GM23248 (cell line): ENCODE measurements at regions of chr21 and their contacts with region 1.

Region 1: DNA sequence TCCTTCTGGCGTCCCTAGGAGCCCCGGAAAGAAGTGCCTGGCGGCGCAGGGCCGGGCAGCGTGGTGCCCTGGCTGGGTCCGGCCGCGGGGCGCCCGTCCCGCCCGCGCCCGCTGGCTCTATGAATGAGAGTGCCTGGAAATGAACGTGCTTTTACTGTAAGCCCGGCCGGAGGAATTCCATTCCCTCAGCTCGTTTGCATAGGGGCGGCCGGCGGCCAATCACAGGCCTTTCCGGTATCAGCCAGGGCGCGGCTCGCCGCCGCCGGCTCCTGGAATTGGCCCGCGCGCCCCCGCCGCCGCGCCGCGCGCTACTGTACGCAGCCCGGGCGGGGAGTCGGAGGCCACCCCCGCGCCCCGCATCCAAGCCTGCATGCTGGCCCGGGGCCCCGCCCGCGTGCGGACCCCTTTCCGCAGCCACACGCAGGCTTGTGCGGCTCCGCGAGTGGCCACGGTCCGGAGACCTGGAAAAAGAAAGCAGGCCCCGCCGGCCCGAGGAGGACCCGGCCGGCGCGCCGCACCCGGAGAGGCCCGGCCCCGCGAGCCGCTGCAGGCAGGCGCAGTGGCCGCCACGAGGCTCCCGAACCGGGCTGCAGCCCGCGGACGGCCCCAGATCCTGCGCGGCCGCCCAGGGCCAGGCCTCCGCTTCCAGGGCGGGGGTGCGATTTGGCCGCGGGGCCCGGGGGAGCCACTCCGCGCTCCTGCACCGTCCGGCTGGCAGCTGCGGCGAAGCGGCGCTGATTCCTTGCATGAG is 160.4 kb downstream of the RUNX1 start:
- DNase-seq: peak; percentile 98
- H3K4me3 ChIP-seq: peak overlapping the region; percentile 97
- H3K27ac ChIP-seq: peak overlapping the region; percentile 99
- H3K4me1 ChIP-seq: peaks cover 19% of the 10 kb centered on the region
- H3K27me3 ChIP-seq: no peaks in the 10 kb centered on the region

Region 2: DNA sequence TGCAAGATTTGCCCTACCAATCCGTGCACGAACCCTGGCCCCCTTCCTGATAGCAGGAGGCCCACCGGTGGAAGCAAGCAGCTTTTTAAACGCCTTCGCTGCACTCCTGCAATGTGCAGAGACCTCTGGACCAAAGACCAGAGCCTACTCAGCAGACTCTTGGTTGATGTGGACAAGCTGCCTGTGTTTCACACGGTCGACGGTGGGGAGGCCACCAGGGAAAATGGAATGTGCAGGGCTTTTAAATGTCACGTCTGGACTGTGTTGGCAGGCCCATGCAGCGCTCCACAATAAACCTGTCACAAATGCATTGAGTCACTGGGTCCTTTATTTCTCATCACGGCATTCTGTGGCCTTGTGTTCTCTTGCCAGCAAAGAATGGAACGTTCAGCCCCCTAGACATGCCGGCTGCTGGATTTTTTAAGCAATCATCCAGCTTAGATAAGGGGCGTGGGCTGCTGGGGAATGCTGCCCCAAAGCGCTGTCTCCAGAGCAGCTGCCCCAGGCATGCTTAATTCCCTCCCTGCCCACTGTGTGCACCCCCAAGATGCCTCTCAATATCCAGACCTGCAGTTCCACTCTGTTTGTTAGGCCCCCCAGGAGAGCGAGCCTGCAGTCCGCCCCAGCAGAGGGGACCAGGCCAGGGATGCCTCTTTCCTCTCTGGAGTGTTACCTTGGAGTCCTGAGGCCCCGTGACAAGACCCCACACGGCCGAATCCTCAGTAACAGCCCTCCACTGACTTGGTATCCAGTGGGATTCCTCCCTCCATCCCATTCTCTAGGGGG is 1044.4 kb before region 1 on chr21:
- in situ Hi-C with region 1: no loop called
- DNase-seq: peak; percentile 60
- H3K4me3 ChIP-seq: no peak overlapping the region
- H3K27ac ChIP-seq: no peak overlapping the region
- H3K4me1 ChIP-seq: peaks cover 29% of the 10 kb centered on the region
- H3K27me3 ChIP-seq: no peaks in the 10 kb centered on the region

Region 3: DNA sequence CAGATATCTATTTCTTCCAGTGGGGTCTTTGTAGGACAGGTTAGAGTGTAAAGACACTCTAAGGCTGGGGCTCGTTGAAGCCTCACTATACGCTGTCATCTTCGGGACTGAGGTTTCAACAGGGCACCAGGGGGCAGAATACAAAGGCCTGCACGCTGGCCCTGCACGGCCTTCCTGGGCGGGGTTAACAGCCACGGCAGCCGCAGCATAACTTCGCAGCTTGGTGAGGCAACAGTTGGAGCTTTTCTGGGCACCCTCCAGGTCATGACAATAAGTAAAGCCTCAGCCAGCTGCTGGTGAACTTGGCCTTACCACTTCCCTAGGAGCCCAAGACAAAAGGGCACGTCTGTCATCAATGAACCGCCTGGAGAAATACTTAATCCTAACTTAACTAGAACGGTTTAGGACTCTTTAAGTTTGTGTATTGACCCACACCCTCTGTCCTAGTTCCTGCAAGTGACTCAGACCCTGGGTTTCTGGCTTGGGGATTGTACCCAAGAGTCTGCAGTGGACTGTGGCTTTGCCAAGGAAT is 162.6 kb after region 1 on chr21:
- in situ Hi-C with region 1: loop called (anchors 10 kb)
- DNase-seq: peak; percentile 97
- H3K4me3 ChIP-seq: 0 out of 2 replicates have a peak overlapping the region, but pooled peaks have one; percentile 26
- H3K27ac ChIP-seq: peak overlapping the region; percentile 84
- H3K4me1 ChIP-seq: peaks cover 50% of the 10 kb centered on the region
- H3K27me3 ChIP-seq: no peaks in the 10 kb centered on the region

Region 4: GRCh38 chr21:35204850-35205541 is 316.3 kb after region 1 on chr21:
- in situ Hi-C with region 1: loop called (anchors 25 kb)
- DNase-seq: peak; percentile 85
- H3K4me3 ChIP-seq: peak overlapping the region; percentile 51
- H3K27ac ChIP-seq: peak overlapping the region; percentile 86
- H3K4me1 ChIP-seq: peaks cover 51% of the 10 kb centered on the region
- H3K27me3 ChIP-seq: no peaks in the 10 kb centered on the region

Region 5: GRCh38 chr21:35284199-35284598 is 395.5 kb after region 1 on chr21:
- in situ Hi-C with region 1: no loop called
- DNase-seq: peak; percentile 7
- H3K4me3 ChIP-seq: no peak overlapping the region
- H3K27ac ChIP-seq: no peak overlapping the region
- H3K4me1 ChIP-seq: 0 out of 2 replicates have a peak, but pooled peaks cover 5% of the 10 kb centered on the region
- H3K27me3 ChIP-seq: no peaks in the 10 kb centered on the region

Region 6: DNA sequence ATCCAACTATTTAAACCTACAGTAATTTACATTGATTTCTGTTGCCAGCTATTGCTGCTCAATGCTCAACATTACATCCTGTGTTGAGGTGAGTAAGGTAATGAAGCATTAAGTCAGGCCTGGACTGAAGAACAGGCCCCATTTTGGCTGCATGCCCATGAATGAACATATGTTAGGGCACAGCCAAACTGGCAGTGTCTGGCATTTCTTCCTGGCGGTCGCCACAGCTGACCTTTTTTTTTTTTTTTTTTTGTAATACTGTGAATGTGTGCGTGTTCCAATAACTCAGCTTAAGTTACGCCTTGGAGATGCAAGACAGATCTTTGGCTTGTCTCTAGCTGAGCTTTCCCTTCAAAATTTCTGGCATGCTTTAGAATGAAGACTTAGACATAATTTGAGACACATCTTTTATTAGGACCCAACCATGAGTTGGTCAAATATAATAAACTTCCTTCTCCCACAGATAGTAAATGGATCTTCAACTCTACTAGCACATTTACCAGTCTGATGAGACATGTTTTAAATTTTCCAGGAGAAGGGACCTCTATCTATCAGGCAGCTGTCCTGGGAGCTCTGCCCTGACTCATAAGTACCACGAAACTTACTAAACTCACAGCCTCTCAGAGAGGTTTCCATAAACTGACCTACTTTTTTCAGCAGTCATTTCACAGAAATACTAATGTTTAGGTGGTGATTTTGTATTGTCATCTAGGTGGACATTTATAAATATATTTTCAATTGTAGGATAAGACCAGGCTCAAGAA is 501.5 kb after region 1 on chr21:
- in situ Hi-C with region 1: loop called (anchors 25 kb)
- DNase-seq: peak; percentile 79
- H3K4me3 ChIP-seq: no peak overlapping the region
- H3K27ac ChIP-seq: peak overlapping the region; percentile 21
- H3K4me1 ChIP-seq: peaks cover 10% of the 10 kb centered on the region
- H3K27me3 ChIP-seq: no peaks in the 10 kb centered on the region

Region 7: GRCh38 chr21:35616090-35616489 is 727.3 kb after region 1 on chr21:
- in situ Hi-C with region 1: loop called (anchors 25 kb)
- DNase-seq: peak; percentile 56
- H3K4me3 ChIP-seq: no peak overlapping the region
- H3K27ac ChIP-seq: peak overlapping the region; percentile 17
- H3K4me1 ChIP-seq: peaks cover 37% of the 10 kb centered on the region
- H3K27me3 ChIP-seq: no peaks in the 10 kb centered on the region

Region 8: DNA sequence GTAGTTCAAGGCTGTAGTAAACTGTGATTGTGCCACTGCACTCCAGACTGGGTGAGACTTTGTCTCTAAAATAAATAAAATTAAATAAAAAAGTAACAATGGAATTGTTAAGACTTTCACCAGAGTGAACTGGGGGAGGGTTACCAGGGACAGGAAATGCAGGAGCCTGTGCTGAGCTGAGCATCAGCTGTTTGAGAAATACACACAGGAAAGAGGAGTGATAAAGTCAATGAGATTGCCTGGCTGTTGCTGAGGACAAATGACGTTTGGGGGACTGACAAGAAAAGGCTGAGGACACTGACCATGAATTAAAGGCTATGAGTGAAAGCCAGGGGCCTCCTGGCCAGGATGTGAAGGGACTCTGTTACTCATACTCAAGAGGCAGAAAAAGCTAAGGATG is 945.2 kb after region 1 on chr21:
- in situ Hi-C with region 1: loop called (anchors 10 kb)
- DNase-seq: no peak
- H3K4me3 ChIP-seq: no peak overlapping the region
- H3K27ac ChIP-seq: no peak overlapping the region
- H3K4me1 ChIP-seq: no peaks in the 10 kb centered on the region
- H3K27me3 ChIP-seq: no peaks in the 10 kb centered on the region

Region 9: GRCh38 chr21:35932232-35932911 is 1043.6 kb after region 1 on chr21:
- in situ Hi-C with region 1: loop called (anchors 25 kb)
- DNase-seq: peak; percentile 91
- H3K4me3 ChIP-seq: peak overlapping the region; percentile 51
- H3K27ac ChIP-seq: peak overlapping the region; percentile 63
- H3K4me1 ChIP-seq: peaks cover 24% of the 10 kb centered on the region
- H3K27me3 ChIP-seq: no peaks in the 10 kb centered on the region